Common myeloid progenitor, CD34-positive (primary cell): ENCODE measurements at regions of chr7 and their contacts with region 1.

Region 1: DNA sequence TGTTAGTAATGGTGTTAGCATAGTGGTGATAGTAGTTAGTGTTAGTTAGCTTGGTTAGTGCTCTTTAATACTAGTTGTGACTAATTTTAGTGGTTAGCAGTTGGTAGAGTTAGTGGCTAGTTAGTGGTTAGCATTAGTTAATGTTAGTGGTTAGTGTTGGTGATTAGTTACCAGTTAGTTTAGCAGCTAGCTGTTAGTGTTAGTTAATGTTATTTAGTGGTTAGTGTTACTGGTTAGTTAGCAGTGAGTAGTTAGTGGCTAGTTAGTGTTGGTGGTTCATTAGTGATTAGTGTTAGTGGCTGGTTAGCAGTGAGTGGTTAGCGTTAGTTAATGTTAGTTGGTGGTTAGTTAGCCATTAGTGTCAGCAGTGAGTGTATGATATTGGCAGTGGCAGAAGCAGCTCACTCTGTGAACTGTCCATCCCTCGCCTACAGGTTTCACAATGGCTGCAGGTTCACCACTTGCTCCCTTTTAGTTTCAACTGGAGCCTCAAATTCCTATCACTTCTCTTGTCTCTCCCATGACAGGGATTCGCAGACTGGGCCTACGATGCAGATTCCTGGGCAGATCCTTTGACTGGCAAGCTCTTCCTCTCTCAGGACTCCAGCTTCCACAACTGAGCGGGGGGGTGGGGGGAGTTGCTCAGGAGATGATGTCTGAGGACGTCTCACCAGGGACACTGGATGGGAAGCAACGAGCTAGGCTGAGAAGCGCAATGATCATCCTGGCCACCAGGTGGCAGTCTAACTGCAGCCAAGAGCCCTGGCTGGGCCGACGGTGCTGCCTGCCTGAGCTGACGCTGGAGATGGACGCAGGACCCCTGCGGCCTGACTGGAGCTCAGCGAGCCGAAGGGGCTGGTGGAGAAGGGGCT is 19.5 kb downstream of the GHRHR start:
- DNase-seq: peak; percentile 65 to 86 (median 77)
- H3K4me3 ChIP-seq: no peak overlapping the region
- H3K27ac ChIP-seq: no peak overlapping the region
- H3K4me1 ChIP-seq: peaks cover 0 to 7% (median 2%) of the 10 kb centered on the region in 4 experiments
- H3K27me3 ChIP-seq: peaks cover 0 to 60% (median 19%) of the 10 kb centered on the region in 5 experiments

Region 2: DNA sequence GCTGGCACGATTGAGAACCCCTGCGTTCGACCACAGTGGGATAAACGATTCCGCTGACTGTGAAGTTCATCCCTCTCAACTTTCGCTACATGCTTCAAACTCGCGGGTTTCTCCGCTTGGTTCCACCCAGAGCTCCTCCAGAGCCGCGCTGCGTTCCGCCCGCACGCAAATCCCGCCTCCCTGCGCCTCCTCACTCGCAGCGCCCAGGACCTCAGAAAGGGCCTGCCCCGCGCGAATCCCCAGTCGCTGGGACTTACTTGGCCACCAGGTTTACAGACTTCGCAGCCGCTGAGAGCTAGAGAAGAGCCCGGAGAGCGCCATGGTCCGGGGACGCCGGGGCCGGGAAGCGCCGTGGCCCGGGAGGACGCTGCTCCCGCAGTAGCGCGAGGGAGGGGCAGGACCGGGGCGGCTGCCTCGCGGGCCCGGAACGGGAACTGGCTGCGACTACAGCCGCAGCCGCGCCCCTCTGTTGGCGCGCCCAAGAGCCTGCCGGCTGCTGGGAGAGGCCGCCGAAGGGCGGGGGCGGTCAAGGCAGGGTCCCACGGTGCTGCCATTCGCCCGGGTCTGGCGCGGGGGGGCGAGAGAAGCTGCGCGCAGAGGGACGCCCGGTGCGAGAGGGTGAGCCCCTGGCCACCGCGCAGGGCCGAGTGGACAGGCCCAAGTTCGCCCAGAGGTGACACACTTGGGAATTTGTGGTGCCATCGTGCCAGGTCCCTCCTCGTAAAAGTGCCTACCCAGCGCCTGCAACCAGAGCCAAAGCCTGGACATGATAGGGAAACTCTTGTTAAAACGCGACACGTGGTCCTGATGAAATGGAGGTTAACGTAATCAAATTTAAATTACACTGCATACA is 504.7 kb before region 1 on chr7 and contains the start of gene NOD1:
- CTCF ChIA-PET with region 1: no interaction called
- POLR2A ChIA-PET with region 1: no interaction called
- DNase-seq: peak; percentile 61 to 84 (median 70)
- H3K4me3 ChIP-seq: peak within 1 kb of the TSS; percentile 83 to 94 (median 89)
- H3K27ac ChIP-seq: peak within 1 kb of the TSS; percentile 50 to 72
- H3K4me1 ChIP-seq: peaks cover 6 to 47% (median 34%) of the 10 kb centered on the region in 4 experiments
- H3K27me3 ChIP-seq: no peaks in the 10 kb centered on the region

Region 3: DNA sequence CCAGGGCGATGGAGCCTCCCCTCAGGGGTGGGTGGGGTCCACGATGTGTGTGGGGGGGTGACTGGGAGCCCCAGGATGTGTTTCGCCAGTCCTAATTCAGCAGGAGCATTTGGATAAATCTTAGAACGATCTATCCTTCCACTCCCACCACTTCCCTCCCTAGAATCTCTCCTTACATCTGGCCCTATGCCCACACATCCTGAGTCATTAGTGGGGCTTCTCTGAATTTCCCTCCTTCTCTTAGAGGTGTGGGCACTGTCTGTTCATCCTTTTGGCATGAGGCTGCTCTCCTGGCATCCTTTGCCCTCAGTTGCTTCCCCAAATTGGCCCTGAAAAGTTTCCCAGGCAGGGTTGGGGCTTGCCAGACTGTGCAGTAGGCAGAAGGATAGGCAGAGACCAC is 17.9 kb before region 1 on chr7:
- CTCF ChIA-PET with region 1: interaction called, 10 read pairs
- POLR2A ChIA-PET with region 1: no interaction called
- DNase-seq: no peak
- H3K4me3 ChIP-seq: no peak overlapping the region
- H3K27ac ChIP-seq: no peak overlapping the region
- H3K4me1 ChIP-seq: no peaks in the 10 kb centered on the region
- H3K27me3 ChIP-seq: peaks cover 0 to 7% (median 0%) of the 10 kb centered on the region in 5 experiments